Heart left ventricle (tissue), 16 donors: ENCODE measurements at regions of chr17 and their contacts with region 1.

Region 1: DNA sequence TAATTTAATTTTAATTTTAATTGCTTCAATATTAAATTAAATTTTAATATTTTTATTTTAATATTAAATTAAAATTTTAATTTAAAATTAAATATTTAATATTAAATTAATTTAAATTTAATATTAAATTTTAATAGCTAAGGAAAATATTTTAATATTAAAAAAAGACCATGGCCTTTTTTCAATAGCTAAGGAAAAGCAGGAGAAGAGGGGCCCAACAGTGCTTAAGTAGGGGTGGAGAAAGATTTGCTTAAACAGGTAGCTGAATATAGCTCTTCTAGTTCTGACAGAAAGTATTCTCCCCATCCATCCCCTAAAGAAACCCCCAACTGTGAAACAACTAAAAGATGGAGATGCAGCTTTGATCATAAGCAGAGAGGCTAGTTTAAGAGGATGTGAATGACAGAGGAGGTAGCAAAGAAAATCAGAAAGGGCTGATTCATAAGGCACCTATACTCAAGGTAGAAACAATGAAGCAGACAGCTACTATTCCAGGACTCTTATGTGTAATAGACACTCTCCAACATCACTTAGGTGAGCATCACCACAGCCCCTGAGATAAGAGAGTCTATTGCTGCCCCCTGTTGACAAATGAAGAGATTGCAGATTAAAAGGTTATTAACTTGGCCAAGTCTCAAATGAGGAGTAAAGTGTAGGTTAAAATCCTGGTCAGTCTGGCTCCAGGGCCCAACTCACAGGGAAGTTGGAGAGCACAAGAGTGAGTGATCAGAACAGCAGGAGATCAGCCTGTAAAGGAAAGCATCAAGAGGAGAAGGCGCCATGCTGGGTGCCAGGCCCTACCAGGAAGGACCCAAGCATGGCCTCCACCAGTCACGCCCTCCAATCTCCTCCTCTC is 7.8 kb upstream of the RNASEK start:
- DNase-seq: no peak
- ATAC-seq: peak; percentile 16 to 81 (median 72)
- H3K4me3 ChIP-seq: no peak overlapping the region
- H3K27ac ChIP-seq: no peak overlapping the region
- H3K4me1 ChIP-seq: peaks cover 0 to 8% (median 0%) of the 10 kb centered on the region in 12 donors
- H3K27me3 ChIP-seq: no peaks in the 10 kb centered on the region
- CTCF ChIP-seq: peak; percentile 58 to 80 (median 72)
- POLR2A ChIP-seq: no peak

Region 2: GRCh38 chr17:6831661-6832263 is 172.9 kb before region 1 on chr17 and contains the start of gene TEKT1:
- intact Hi-C with region 1: loop called in 1 of 10 experiments (anchors 10 kb)
- DNase-seq: peak; percentile 66 to 84 (median 69)
- ATAC-seq: peak in 3 of 4 donors; percentile 81 to 94 (median 81)
- H3K4me3 ChIP-seq: peak within 1 kb of the TSS in 10 of 12 donors; percentile 5 to 49 (median 33)
- H3K27ac ChIP-seq: no peak within 1 kb of the TSS
- H3K4me1 ChIP-seq: peaks cover 0 to 11% (median 5%) of the 10 kb centered on the region in 12 donors
- H3K27me3 ChIP-seq: peaks cover 4 to 82% (median 46%) of the 10 kb centered on the region in 9 donors
- CTCF ChIP-seq: no peak
- POLR2A ChIP-seq: no peak
- total RNA-seq, gene TEKT1: not detected

Region 3: DNA sequence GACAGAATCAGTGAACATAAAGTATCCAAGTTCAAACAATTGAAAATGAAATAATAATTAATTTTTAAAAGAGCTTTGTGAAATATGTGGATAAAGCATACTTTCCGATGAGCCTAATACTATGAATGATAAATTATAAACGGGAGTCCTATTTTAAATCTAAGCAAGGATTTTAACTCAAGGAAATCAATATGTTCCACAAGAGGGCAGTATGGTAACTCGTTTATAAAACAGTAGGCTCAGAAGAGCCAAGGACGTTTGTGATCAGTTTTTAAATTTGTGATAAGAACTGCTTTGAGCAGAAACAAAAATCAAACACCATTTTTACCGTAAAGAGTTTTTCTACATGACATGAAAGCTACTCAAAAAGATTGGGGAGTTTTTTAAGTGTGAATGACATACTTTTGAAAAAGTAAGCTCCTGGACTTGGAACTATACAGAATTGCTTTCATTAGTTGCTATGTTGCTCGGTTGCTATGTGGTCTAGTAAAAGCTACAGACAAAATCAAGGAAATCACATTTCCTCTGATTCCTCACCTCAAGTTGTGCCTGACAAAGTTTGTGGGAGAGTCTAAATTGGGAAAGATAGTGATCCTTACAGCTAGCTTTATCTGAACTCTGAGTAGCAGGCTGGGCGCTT is 161.3 kb before region 1 on chr17:
- intact Hi-C with region 1: loop called in 4 of 10 experiments (anchors 5 to 10 kb)
- DNase-seq: no peak
- ATAC-seq: peak in 1 of 4 donors; percentile 49
- H3K4me3 ChIP-seq: peak overlapping the region in 2 of 12 donors; percentile 5
- H3K27ac ChIP-seq: no peak overlapping the region
- H3K4me1 ChIP-seq: peaks cover 0 to 6% (median 0%) of the 10 kb centered on the region in 12 donors
- H3K27me3 ChIP-seq: peaks cover 0 to 41% (median 2%) of the 10 kb centered on the region in 9 donors
- CTCF ChIP-seq: peak; percentile 44 to 69 (median 54)
- POLR2A ChIP-seq: no peak

Region 4: GRCh38 chr17:6913608-6914443 is 90.8 kb before region 1 on chr17:
- intact Hi-C with region 1: loop called (anchors 1 to 5 kb)
- DNase-seq: peak; percentile 72 to 81 (median 76)
- ATAC-seq: peak; percentile 77 to 90 (median 82)
- H3K4me3 ChIP-seq: peak overlapping the region in 9 of 12 donors; percentile 16 to 50 (median 37)
- H3K27ac ChIP-seq: no peak overlapping the region
- H3K4me1 ChIP-seq: peaks cover 0 to 11% (median 6%) of the 10 kb centered on the region in 12 donors
- H3K27me3 ChIP-seq: peaks cover 0 to 12% (median 0%) of the 10 kb centered on the region in 9 donors
- CTCF ChIP-seq: peak; percentile 77 to 88 (median 84)
- POLR2A ChIP-seq: no peak

Region 5: DNA sequence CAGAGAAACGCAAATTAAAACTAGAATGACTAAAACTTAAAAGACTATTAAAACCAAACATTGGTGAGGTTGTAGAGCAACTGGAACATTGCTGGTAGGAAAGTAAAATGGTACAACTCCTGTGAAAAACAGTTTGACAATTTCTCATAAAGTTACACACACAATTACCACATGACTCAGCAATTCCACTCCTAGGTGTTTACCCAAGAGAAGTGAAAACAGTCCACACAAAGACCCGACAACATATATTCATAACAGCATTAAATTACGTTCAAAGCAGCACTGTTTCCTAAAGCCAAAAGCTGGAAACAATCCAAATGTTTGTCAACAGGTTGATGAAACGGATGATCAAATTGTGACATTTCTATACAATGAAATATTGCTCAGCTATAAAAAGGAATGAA is 35.3 kb before region 1 on chr17:
- intact Hi-C with region 1: no loop called
- DNase-seq: no peak
- ATAC-seq: no peak
- H3K4me3 ChIP-seq: no peak overlapping the region
- H3K27ac ChIP-seq: no peak overlapping the region
- H3K4me1 ChIP-seq: no peaks in the 10 kb centered on the region
- H3K27me3 ChIP-seq: no peaks in the 10 kb centered on the region
- CTCF ChIP-seq: no peak
- POLR2A ChIP-seq: no peak

Region 6: DNA sequence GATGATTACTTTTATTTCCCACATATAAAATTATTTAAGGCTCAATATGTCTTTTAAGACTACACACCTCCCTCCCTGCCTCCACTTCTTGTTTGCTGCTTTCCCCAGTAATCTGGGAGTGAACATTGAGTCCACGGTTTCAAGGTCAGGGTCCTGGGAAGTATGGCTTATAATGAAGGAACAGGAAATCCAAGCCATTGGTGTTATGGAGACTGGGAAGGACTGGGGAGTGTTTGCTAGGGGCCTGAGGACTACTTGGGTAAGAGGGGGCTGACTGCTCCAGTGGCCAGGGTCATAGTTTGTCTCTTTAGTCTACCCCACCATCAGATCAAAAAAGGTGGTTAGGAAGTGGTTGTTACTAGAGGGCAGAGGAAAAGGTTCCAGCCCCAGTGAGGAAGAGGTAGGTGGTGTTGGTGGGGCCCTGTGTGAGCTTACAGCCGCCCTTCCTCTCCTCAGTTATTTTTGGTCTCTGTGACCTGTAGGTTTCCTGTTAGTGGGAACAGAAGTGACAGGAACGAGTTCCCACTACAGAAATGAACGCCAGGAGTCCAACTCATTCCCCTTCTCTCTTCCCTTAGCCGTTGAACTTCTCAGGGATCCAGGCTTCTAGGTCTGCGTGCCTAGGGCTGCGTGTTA is 30.4 kb after region 1 on chr17:
- intact Hi-C with region 1: no loop called
- DNase-seq: peak in 1 of 5 donors; percentile 50
- ATAC-seq: peak; percentile 44 to 76 (median 54)
- H3K4me3 ChIP-seq: peak overlapping the region; percentile 53 to 88 (median 67)
- H3K27ac ChIP-seq: peak overlapping the region; percentile 74 to 97 (median 88)
- H3K4me1 ChIP-seq: peaks cover 0 to 29% (median 8%) of the 10 kb centered on the region in 12 donors
- H3K27me3 ChIP-seq: no peaks in the 10 kb centered on the region
- CTCF ChIP-seq: no peak
- POLR2A ChIP-seq: no peak